ENCODE measurements at regions of chr2 and their contacts with region 1.

Region 1: DNA sequence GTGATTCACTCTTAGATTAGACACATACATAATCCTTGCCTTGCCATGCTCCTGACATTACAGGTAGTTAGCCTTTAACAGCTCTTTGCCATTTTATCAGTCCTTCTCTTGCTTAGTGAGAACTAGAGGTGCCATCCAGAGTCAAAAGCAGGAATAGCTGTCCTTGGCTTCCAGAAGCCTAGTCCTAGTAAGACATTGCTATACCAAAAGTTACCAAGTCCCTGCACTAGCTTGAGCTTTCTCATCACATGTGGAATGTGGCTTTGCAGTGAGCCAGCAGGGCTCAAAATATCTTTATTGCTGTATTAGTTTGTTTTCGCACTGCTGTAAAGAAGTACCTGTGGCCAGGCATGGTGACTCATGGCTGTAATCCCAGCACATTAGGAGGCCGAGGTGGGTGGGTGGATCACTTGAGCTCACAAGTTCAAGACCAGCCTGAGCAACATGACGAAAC is 104.7 kb upstream of the NOSTRIN start:
- DNase-seq: no peak
- H3K4me3 ChIP-seq: no peak overlapping the region
- H3K27ac ChIP-seq: no peak overlapping the region
- H3K4me1 ChIP-seq: no peaks in the 10 kb centered on the region
- H3K27me3 ChIP-seq: no peaks in the 10 kb centered on the region
- CTCF ChIP-seq: peak in 1 of 3 experiments; percentile 20; a peak in 1 of 4 replicates
- EP300 ChIP-seq: no peak
- POLR2A ChIP-seq: no peak
- RAD21 ChIP-seq: peak; percentile 45 to 59

Region 2: DNA sequence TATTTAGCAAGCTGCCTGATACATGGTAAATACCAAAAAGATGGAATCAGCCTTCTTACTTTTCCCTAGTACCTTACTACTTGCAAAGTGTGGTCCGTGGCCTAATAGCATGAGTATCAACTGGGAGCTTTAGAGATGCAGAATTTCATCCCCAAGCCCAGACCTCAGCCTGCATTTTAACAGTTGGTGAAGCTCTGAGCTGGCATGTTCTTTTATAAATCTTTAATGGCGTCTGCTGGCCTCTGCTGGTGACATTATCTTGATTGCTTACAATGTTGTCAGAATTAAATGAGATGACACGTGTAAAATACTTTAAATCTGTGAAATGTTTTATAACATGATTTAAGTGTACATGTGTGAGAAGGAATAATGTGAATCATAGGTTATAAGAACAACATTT is 10.4 kb before region 1 on chr2:
- CTCF ChIA-PET with region 1: interaction called, 11 read pairs
- POLR2A ChIA-PET with region 1: interaction called, 4 read pairs
- DNase-seq: no peak
- H3K4me3 ChIP-seq: no peak overlapping the region
- H3K27ac ChIP-seq: no peak overlapping the region
- H3K4me1 ChIP-seq: peaks cover 0 to 5% (median 0%) of the 10 kb centered on the region in 4 experiments; a peak in 2 of 7 replicates
- H3K27me3 ChIP-seq: no peaks in the 10 kb centered on the region
- CTCF ChIP-seq: peak in 2 of 3 experiments; percentile 30 to 40; a peak in 2 of 4 replicates
- EP300 ChIP-seq: no peak
- POLR2A ChIP-seq: no peak
- RAD21 ChIP-seq: peak; percentile 63 to 67

Measured in H1 (cell line).